Endothelial cell of umbilical vein (primary cell): ENCODE measurements at regions of chr18 and their contacts with region 1.

Region 1: DNA sequence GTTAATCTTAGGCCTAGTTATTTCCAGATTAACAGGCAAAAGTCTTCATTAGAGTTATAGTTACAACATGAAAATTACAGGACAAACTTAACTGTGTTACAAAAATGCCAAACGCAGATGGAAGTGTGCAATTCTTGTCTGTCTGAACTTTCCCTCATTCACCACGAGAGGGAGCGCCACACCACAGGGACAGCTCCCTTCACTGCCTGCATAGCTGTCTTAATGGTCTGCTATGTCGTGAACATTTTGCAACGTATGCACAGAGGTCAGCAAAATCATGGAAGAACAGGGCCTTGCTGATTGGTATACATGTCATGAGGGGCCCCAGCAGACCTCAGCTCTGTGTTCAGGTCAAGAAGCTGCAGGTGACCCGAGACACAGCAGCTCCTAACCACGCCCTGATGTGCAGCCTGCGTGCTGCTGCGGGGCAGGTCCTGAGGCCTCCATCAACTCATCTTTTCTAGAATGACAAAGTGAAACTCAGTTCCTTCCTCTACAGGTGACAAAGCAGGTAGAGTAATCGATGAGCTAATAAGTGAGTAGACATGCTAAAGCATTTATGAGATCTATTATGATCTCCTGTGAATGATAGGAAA is 78.8 kb upstream of the ATP8B1 start:
- DNase-seq: peak; percentile 83
- H3K4me3 ChIP-seq: no peak overlapping the region
- H3K27ac ChIP-seq: no peak overlapping the region
- H3K4me1 ChIP-seq: no peaks in the 10 kb centered on the region
- H3K27me3 ChIP-seq: no peaks in the 10 kb centered on the region
- CTCF ChIP-seq: peak; percentile 85 to 91
- POLR2A ChIP-seq: no peak

Region 2: DNA sequence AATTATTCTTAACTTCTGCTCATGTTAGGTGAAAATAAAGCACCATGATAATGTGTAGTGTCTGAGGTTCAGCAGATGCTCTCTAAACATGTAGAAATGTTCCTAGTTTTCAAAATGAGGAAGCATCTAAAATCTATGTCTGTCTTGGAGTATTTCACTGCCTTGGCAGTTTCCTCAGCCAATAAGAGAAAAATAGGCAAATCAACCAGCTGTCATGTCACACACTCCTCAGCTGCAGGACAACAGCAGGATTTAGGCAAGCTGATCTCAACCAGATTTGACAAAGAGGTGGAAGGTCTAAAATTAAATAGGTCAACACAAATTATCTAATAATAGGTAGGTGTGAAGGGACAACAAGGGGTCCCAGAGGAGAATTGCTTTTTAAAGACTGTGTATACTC is 899.1 kb before region 1 on chr18:
- CTCF ChIA-PET with region 1: no interaction called
- POLR2A ChIA-PET with region 1: no interaction called
- dilution Hi-C with region 1: no loop called
- intact Hi-C with region 1: no loop called
- DNase-seq: no peak
- H3K4me3 ChIP-seq: no peak overlapping the region
- H3K27ac ChIP-seq: no peak overlapping the region
- H3K4me1 ChIP-seq: no peaks in the 10 kb centered on the region
- H3K27me3 ChIP-seq: no peaks in the 10 kb centered on the region
- CTCF ChIP-seq: no peak
- POLR2A ChIP-seq: no peak

Region 3: GRCh38 chr18:57797209-57797651 is 84.7 kb before region 1 on chr18:
- CTCF ChIA-PET with region 1: interaction called, 12 read pairs
- POLR2A ChIA-PET with region 1: no interaction called
- dilution Hi-C with region 1: no loop called
- intact Hi-C with region 1: no loop called
- DNase-seq: no peak
- H3K4me3 ChIP-seq: no peak overlapping the region
- H3K27ac ChIP-seq: no peak overlapping the region
- H3K4me1 ChIP-seq: peaks cover 48% of the 10 kb centered on the region
- H3K27me3 ChIP-seq: no peaks in the 10 kb centered on the region
- CTCF ChIP-seq: no peak
- POLR2A ChIP-seq: no peak

Region 4: DNA sequence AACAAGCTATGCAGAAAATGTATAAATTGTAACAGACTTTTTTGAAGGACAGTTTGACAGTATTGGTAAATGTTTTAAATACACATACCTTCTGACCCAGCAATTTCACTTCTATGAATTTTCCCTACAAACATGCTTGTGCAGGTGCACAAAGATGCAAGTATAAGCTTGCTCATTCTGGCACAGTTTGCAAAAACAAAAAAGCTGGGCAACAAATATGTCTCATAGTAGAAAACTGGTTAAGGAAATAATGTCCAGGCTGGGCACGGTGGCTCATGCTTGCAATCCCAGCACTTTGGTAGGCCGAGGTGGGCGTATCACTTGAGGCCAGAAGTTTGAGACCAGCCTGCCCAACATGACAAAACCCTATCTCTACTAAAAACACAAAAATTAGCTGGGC is 65.2 kb after region 1 on chr18:
- CTCF ChIA-PET with region 1: interaction called, 4 read pairs
- POLR2A ChIA-PET with region 1: no interaction called
- dilution Hi-C with region 1: no loop called
- intact Hi-C with region 1: loop called (anchors 5 kb)
- DNase-seq: no peak
- H3K4me3 ChIP-seq: no peak overlapping the region
- H3K27ac ChIP-seq: no peak overlapping the region
- H3K4me1 ChIP-seq: no peaks in the 10 kb centered on the region
- H3K27me3 ChIP-seq: peaks cover 0 to 7% of the 10 kb centered on the region in 2 experiments
- CTCF ChIP-seq: no peak
- POLR2A ChIP-seq: no peak

Region 5: DNA sequence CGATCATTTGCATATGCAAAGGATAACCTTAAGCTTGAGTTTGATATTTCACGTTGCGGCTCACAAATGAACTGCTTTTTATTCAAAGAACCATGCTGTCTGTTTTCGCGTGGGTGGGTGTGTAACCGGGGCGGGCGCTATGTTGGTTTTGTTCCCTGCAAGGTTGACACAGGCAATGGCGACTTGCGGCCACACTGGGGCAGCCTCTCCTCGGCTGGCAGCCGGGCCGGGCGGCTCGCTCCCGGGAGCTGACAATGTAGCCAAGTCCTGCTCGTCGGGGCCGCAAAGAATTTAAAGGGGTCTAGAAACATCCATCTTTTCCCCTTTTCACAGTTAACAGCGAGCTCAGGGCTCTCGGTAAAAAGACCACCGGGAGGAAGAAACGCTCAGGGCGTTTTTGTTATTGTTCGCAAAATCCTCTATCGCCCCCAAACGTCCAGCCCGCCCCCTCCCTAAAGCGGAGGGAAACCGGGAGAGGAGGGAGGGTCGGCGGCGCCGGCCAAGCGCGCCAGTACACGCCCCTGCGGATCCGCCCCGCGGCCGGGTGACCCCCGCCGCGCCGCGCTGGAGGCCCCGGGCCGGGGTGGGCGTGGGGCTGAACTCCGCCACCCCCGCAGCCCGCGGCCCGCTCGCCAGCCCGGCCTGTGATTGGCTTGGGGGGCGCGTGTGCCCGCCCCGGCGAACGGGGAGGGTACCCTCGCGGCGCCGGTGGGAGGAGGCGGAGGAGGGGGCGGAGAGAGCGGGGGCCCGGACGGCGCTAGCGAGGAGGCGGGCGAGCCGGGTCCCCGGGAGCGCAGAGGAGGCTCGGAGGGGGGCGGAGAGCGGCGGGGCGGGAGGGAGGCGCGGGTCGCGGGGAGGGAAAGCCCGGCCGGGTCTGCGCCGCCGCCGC is 161.8 kb after region 1 on chr18 and contains the start of gene NEDD4L:
- CTCF ChIA-PET with region 1: interaction called, 22 read pairs
- POLR2A ChIA-PET with region 1: no interaction called
- dilution Hi-C with region 1: no loop called
- intact Hi-C with region 1: loop called (anchors 1 kb)
- DNase-seq: peak; percentile 87
- H3K4me3 ChIP-seq: peak within 1 kb of the TSS; percentile 75 to 93 (median 77)
- H3K27ac ChIP-seq: peak within 1 kb of the TSS; percentile 72
- H3K4me1 ChIP-seq: peaks cover 16% of the 10 kb centered on the region
- H3K27me3 ChIP-seq: no peaks in the 10 kb centered on the region
- CTCF ChIP-seq: peak; percentile 79 to 91
- POLR2A ChIP-seq: no peak
- total RNA-seq, gene NEDD4L: 78.9 and 95.9 TPM in 2 replicates

Region 6: GRCh38 chr18:58180738-58181353 is 298.9 kb after region 1 on chr18:
- CTCF ChIA-PET with region 1: interaction called, 6 read pairs
- POLR2A ChIA-PET with region 1: no interaction called
- dilution Hi-C with region 1: no loop called
- intact Hi-C with region 1: loop called (anchors 1 kb)
- DNase-seq: peak; percentile 67
- H3K4me3 ChIP-seq: no peak overlapping the region
- H3K27ac ChIP-seq: no peak overlapping the region
- H3K4me1 ChIP-seq: peaks cover 24% of the 10 kb centered on the region
- H3K27me3 ChIP-seq: no peaks in the 10 kb centered on the region
- CTCF ChIP-seq: peak; percentile 75 to 77
- POLR2A ChIP-seq: no peak

Region 7: DNA sequence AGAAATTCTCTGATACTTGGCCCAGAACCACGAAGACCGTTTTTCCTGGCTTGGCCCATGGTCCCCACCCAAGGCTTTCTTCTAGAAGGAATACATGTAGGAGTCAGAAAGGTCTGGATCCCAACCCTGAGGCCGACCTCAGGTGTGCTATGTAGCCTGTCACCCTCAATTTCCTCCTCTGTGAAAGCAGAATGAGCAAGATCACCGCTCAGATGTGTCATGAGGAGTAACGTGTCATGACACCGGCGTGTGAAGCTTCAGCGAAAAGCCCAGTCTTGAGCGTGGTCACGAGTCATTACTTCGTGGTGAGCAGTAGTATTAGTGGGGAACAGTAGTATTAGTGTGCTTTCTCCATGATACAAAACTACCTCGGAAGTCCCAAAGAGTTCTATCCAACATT is 643.6 kb after region 1 on chr18:
- CTCF ChIA-PET with region 1: no interaction called
- POLR2A ChIA-PET with region 1: no interaction called
- dilution Hi-C with region 1: no loop called
- intact Hi-C with region 1: no loop called
- DNase-seq: no peak
- H3K4me3 ChIP-seq: no peak overlapping the region
- H3K27ac ChIP-seq: no peak overlapping the region
- H3K4me1 ChIP-seq: no peaks in the 10 kb centered on the region
- H3K27me3 ChIP-seq: peaks cover 8 to 21% of the 10 kb centered on the region in 2 experiments
- CTCF ChIP-seq: no peak
- POLR2A ChIP-seq: no peak